GM12878 (cell line): ENCODE measurements at regions of chr11 and their contacts with region 1.

Region 1: GRCh38 chr11:35138943-35139721 is at the start of gene CD44:
- DNase-seq: no peak
- ATAC-seq: peak; percentile 54
- H3K4me3 ChIP-seq: peak within 1 kb of the TSS; percentile 88
- H3K27ac ChIP-seq: peak within 1 kb of the TSS; percentile 68
- H3K4me1 ChIP-seq: peaks cover 34% of the 10 kb centered on the region
- H3K27me3 ChIP-seq: no peaks in the 10 kb centered on the region
- CTCF ChIP-seq: no peak
- EP300 ChIP-seq: no peak
- POLR2A ChIP-seq: peak; percentile 99
- RAD21 ChIP-seq: no peak
- polyA plus RNA-seq, gene CD44: 57.1 to 65.3 TPM

Region 2: GRCh38 chr11:35116762-35117640 is 22.1 kb before region 1 on chr11:
- CTCF ChIA-PET with region 1: interaction called, 5 read pairs
- POLR2A ChIA-PET with region 1: interaction called, 3 read pairs
- RAD21 ChIA-PET with region 1: interaction called, 4 read pairs
- SMC1A ChIA-PET with region 1: interaction called, 13 read pairs
- in situ Hi-C with region 1: no loop called
- intact Hi-C with region 1: no loop called
- DNase-seq: no peak
- ATAC-seq: no peak
- H3K4me3 ChIP-seq: no peak overlapping the region
- H3K27ac ChIP-seq: no peak overlapping the region
- H3K4me1 ChIP-seq: peaks cover 53% of the 10 kb centered on the region
- H3K27me3 ChIP-seq: no peaks in the 10 kb centered on the region
- CTCF ChIP-seq: no peak
- EP300 ChIP-seq: no peak
- POLR2A ChIP-seq: no peak
- RAD21 ChIP-seq: no peak

Region 3: DNA sequence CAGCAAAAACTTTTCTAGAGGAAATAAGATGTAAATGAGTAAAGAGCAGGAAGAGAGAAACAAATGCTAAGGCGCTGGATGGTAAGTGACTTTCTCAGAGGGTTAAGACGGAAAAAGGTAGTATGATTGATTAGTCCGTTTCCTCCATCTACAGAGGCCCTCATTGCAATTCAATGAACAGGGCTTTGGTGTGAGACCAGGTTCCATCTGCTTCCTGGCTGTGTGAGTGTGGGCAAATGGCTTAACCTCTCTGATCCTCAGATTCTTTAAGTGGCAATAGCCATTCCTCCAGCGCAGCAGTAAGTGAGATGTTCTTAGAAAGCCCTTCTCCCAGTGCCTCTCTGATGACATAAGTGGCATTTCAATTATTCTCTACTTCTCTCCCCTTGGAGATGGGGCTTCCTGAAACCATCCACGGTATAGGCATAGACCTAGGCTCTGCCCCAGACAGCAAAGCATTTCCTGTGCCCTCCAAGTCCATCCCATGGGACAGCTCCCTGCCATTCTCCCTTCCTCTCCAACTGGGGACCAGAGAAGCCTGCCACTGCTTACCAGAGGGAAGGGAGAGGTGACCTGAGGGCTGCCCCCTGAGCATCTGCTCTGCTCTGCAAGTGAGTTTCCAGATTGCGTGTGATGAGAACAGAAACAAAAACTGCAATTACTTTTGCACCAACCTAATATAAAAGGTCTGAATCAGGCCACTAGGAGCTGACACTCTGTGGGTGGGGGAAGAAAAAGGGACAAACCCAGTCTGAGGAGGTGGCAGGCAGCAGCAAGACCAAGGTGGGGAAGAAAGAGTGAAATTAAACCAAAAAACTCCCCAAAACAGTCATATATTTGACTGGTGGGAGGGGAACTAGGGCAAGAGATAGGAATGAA is 12.9 kb before region 1 on chr11:
- CTCF ChIA-PET with region 1: interaction called, 10 read pairs
- POLR2A ChIA-PET with region 1: interaction called, 7 read pairs
- RAD21 ChIA-PET with region 1: interaction called, 40 read pairs
- SMC1A ChIA-PET with region 1: interaction called, 27 read pairs
- in situ Hi-C with region 1: no loop called
- intact Hi-C with region 1: loop called (anchors 2 kb)
- DNase-seq: peak; percentile 88
- ATAC-seq: peak; percentile 84
- H3K4me3 ChIP-seq: peak overlapping the region; percentile 0; the same call in 1 of the 2 replicates
- H3K27ac ChIP-seq: peak overlapping the region; percentile 77
- H3K4me1 ChIP-seq: peaks cover 60% of the 10 kb centered on the region
- H3K27me3 ChIP-seq: no peaks in the 10 kb centered on the region
- CTCF ChIP-seq: peak; percentile 10 to 36 (median 14); a peak in 3 of 6 replicates
- EP300 ChIP-seq: peak; percentile 71 to 87
- POLR2A ChIP-seq: peak; percentile 63
- RAD21 ChIP-seq: peak; percentile 54